ENCODE measurements at regions of chr7 and their contacts with region 1.

Region 1: GRCh38 chr7:15305002-15305600 is 256.7 kb downstream of the AGMO start:
- DNase-seq: peak; percentile 4
- CTCF ChIP-seq: peak; percentile 39

Region 2: DNA sequence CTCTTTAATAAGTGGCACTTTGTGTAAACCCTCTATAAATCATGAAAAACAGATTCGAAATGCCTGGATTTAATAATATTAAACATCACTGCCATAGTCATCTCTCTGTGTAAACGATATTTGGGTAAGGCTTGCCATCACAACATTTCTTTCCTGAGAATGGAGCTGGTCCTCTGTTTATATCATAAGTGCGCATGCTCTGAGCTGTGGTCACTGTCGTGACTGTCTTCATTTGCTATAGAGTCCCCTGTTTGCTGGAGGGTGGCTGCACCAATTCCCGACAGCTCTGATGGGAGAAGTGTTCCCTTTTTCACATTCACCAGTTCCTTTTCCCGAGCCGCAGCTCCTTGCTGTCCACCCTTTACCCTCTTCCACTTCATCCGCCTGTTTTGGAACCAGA is 307.1 kb after region 1 on chr7:
- in situ Hi-C with region 1: no loop called
- DNase-seq: no peak
- CTCF ChIP-seq: no peak

Region 3: DNA sequence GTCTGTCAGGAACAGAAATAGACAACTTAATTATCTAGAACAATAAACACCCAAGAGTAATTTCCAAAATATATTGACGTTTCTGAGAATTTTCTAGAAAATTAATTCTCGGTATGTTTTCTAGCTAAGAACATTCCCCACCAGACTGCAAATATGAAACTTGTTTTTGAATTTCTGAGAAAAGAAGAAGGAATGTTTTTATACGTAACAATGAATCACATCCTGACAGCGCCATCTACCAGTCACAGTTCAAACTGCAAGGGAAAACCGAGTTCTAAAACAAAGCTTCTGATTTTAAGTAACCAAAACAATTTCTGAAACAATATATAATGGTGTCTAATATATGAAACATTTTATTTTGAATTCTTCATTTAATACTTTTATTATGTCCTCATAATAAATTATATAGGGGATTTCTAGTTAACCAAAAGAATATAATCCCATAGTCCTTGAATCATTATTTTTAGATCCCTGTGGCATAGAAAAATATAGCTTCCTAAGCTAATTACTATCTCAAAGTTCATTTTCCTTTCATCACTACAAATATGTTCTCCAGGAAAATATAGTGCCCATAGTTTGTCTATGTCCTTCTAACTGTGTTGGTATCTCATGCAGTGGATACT is 415.9 kb after region 1 on chr7:
- in situ Hi-C with region 1: loop called (anchors 25 kb)
- DNase-seq: peak; percentile 4
- CTCF ChIP-seq: peak; percentile 39

Region 4: GRCh38 chr7:16071246-16071857 is 766.3 kb after region 1 on chr7:
- in situ Hi-C with region 1: loop called (anchors 25 kb)
- DNase-seq: peak; percentile 13
- CTCF ChIP-seq: peak; percentile 44

Measured in GM13976 (cell line).